K562 (cell line): ENCODE measurements at regions of chr12 and their contacts with region 1.

Region 1: DNA sequence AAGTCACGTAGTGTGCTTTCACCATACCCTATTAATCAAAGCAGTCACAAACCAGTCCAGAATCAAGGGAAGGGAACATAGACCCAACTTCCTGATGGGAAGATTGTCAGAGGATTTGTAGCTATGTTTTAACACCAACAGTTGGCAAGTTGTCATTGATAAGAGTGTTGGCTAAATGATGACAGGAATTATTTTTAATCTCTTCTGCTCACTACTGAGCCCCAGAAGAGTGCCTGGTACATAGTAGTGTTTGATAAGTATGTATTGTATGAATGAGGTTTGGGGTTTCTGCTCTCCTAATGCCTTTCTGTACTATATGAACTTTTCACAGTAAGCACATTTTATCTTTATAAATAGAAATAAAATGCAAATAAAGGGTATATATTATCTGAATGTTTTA is 14.7 kb downstream of the HCFC2 start:
- DNase-seq: no peak
- ATAC-seq: no peak
- H3K4me3 ChIP-seq: no peak overlapping the region
- H3K27ac ChIP-seq: no peak overlapping the region
- H3K4me1 ChIP-seq: no peaks in the 10 kb centered on the region
- H3K27me3 ChIP-seq: no peaks in the 10 kb centered on the region
- CTCF ChIP-seq: no peak
- EP300 ChIP-seq: no peak
- POLR2A ChIP-seq: no peak
- RAD21 ChIP-seq: no peak

Region 2: DNA sequence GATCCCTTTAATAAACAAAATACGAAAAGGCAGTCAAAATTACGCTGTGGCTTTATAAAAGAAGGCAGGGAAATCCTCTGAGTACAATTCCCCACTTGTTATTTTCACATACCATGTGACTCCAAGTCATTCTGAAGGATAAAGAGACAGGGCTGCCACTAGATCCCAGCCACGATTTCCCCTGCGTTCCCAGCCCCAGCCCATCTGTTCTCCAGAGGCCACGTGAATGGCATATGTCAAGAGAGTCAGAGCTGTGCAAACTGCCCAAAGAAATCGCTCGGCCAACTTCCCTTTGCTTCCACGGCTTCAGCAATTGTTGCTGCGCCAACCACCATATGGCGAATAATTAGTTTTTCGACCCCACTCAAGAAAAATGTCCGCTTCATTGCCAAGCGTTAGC is 744.6 kb before region 1 on chr12:
- CTCF ChIA-PET with region 1: no interaction called
- POLR2A ChIA-PET with region 1: no interaction called
- in situ Hi-C with region 1: no loop called
- intact Hi-C with region 1: no loop called
- DNase-seq: no peak
- ATAC-seq: no peak
- H3K4me3 ChIP-seq: no peak overlapping the region
- H3K27ac ChIP-seq: no peak overlapping the region
- H3K4me1 ChIP-seq: no peaks in the 10 kb centered on the region
- H3K27me3 ChIP-seq: no peaks in the 10 kb centered on the region
- CTCF ChIP-seq: no peak
- EP300 ChIP-seq: no peak
- POLR2A ChIP-seq: no peak
- RAD21 ChIP-seq: no peak

Region 3: DNA sequence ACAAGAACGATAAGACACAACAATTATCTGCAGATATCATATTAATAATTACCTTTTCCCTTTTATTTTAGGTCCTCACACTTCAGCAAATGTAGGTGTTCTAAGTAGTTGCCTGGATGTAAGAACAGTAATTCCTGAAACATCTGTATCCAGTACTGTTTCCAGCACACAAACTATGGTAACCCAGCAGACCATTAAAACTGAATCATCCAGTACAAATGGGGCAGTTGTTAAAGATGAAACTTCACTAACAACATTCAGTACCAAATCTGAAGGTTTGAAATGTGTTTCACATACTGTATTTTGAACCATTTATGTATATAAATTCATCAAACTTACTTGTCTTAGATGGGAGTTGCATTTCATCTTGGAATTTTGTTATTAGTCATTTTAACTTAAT is 16.3 kb after region 1 on chr12:
- CTCF ChIA-PET with region 1: no interaction called
- POLR2A ChIA-PET with region 1: interaction called, 3 read pairs
- in situ Hi-C with region 1: no loop called
- intact Hi-C with region 1: loop called (anchors 1 kb)
- DNase-seq: no peak
- ATAC-seq: no peak
- H3K4me3 ChIP-seq: no peak overlapping the region
- H3K27ac ChIP-seq: no peak overlapping the region
- H3K4me1 ChIP-seq: peaks cover 0 to 2% of the 10 kb centered on the region in 2 experiments; a peak in 1 of 5 replicates
- H3K27me3 ChIP-seq: no peaks in the 10 kb centered on the region
- CTCF ChIP-seq: no peak
- EP300 ChIP-seq: no peak
- POLR2A ChIP-seq: no peak
- RAD21 ChIP-seq: no peak